ENCODE measurements at regions of chr6 and their contacts with region 1.

Region 1: DNA sequence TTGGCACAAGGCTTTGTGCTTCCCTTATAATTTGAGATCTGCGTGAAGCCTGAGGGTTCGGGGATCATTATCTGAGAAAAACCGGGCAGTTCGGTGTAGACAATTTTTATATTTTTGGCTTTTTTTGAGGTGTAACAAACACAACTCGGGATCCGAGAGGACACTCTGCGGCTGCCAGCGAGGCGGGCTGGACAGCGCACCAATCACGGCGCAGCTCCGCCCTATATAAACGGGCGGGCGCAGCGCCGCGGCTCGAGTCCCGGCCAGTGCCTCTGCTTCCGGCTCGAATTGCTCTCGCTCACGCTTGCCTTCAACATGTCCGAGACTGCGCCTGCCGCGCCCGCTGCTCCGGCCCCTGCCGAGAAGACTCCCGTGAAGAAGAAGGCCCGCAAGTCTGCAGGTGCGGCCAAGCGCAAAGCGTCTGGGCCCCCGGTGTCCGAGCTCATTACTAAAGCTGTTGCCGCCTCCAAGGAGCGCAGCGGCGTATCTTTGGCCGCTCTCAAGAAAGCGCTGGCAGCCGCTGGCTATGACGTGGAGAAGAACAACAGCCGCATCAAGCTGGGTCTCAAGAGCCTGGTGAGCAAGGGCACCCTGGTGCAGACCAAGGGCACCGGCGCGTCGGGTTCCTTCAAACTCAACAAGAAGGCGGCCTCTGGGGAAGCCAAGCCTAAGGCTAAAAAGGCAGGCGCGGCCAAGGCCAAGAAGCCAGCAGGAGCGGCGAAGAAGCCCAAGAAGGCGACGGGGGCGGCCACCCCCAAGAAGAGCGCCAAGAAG is 69.0 kb downstream of the HFE start:
- DNase-seq: peak; percentile 72 to 94 (median 83)
- H3K4me3 ChIP-seq: peak overlapping the region; percentile 84
- H3K4me3 Mint-ChIP-seq: peak overlapping the region; percentile 87 to 98 (median 94)
- H3K27ac ChIP-seq: peak overlapping the region; percentile 97
- H3K27ac Mint-ChIP-seq: peak overlapping the region; percentile 87 to 99 (median 96)
- H3K4me1 ChIP-seq: peaks cover 20% of the 10 kb centered on the region
- H3K4me1 Mint-ChIP-seq: peaks cover 26 to 47% (median 41%) of the 10 kb centered on the region in 3 donors
- H3K27me3 ChIP-seq: no peaks in the 10 kb centered on the region
- H3K27me3 Mint-ChIP-seq: peaks cover 0 to 1% of the 10 kb centered on the region in 2 donors

Region 2: DNA sequence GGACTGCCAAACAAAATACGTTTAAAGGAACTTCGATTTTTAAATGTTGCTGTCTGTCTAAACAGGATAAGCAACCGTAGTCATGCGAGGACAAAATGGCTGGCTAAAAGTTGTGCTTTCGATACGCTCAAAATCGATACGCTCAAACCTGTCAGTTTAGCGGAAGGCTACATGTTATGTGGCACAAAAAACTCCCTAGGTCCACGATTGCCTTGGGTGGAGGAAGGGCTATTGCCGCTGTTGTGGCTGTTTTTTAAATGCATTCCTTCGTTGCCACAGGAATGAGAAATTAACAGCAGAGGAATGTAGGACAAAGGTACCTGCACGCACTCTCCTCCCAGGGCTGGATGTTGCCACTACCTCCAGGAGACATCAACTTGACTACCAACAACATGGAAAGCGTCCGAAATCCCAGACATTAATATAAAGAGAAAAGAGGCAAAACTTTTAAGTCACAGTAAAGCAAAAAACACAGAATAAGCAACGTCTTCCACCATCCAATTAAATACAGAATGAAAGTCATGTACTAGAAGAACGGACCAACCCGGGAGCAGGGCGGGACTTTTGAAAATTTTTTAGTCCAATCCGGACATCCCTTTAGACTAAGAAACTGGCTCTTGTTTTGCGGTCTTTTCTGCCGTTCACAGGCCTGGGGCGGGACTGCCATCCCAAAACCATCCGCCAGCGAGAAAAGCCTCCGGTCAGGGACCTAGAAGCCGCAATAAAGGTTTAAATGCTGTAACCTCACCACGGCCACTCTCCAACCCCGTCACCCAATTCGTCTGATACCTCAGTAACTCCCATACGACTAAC is 101.2 kb before region 1 on chr6:
- CTCF ChIA-PET with region 1: no interaction called
- POLR2A ChIA-PET with region 1: interaction called, 51 read pairs
- DNase-seq: peak; percentile 74 to 89 (median 86)
- H3K4me3 ChIP-seq: peak overlapping the region; percentile 92
- H3K4me3 Mint-ChIP-seq: peak overlapping the region; percentile 90 to 97 (median 94)
- H3K27ac ChIP-seq: peak overlapping the region; percentile 96
- H3K27ac Mint-ChIP-seq: peak overlapping the region; percentile 90 to 99 (median 97)
- H3K4me1 ChIP-seq: peaks cover 9% of the 10 kb centered on the region
- H3K4me1 Mint-ChIP-seq: peaks cover 17 to 30% (median 26%) of the 10 kb centered on the region in 3 donors
- H3K27me3 ChIP-seq: no peaks in the 10 kb centered on the region
- H3K27me3 Mint-ChIP-seq: peaks cover 0 to 4% of the 10 kb centered on the region in 2 donors

Region 3: GRCh38 chr6:26175428-26176181 is 19.3 kb after region 1 on chr6:
- CTCF ChIA-PET with region 1: interaction called, 41 read pairs
- POLR2A ChIA-PET with region 1: interaction called, 317 read pairs
- DNase-seq: peak; percentile 8 to 63 (median 52)
- H3K4me3 ChIP-seq: no peak overlapping the region
- H3K4me3 Mint-ChIP-seq: peak overlapping the region in 2 of 7 donors; percentile 21 to 75
- H3K27ac ChIP-seq: no peak overlapping the region
- H3K27ac Mint-ChIP-seq: peak overlapping the region; percentile 8 to 89 (median 78)
- H3K4me1 ChIP-seq: peaks cover 36% of the 10 kb centered on the region
- H3K4me1 Mint-ChIP-seq: peaks cover 30 to 44% (median 40%) of the 10 kb centered on the region in 3 donors
- H3K27me3 ChIP-seq: no peaks in the 10 kb centered on the region
- H3K27me3 Mint-ChIP-seq: peaks cover 0 to 3% of the 10 kb centered on the region in 2 donors

Region 4: DNA sequence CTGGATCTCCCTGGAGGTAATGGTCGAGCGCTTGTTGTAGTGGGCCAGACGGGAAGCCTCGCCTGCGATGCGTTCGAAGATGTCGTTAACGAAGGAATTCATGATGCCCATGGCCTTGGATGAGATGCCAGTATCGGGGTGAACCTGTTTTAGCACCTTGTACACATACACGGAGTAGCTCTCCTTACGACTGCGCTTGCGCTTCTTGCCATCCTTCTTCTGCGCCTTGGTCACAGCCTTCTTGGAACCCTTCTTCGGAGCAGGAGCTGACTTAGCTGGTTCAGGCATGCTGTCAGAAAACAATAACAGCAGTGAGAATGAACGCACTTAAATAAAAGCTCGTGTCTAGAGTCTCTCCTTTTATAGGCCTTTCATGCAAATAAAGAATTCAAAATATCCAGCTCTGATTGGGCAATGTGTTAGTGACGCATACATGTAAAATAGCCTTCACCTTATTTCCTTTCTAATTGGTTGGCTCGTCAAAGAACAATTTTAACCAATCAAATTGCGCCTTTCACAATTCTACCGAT is 60.2 kb after region 1 on chr6:
- CTCF ChIA-PET with region 1: interaction called, 29 read pairs
- POLR2A ChIA-PET with region 1: interaction called, 160 read pairs
- DNase-seq: peak; percentile 43 to 93 (median 91)
- H3K4me3 ChIP-seq: peak overlapping the region; percentile 91
- H3K4me3 Mint-ChIP-seq: no peak overlapping the region
- H3K27ac ChIP-seq: peak overlapping the region; percentile 94
- H3K27ac Mint-ChIP-seq: no peak overlapping the region
- H3K4me1 ChIP-seq: peaks cover 23% of the 10 kb centered on the region
- H3K4me1 Mint-ChIP-seq: peaks cover 2 to 8% (median 5%) of the 10 kb centered on the region in 3 donors
- H3K27me3 ChIP-seq: no peaks in the 10 kb centered on the region
- H3K27me3 Mint-ChIP-seq: no peaks in the 10 kb centered on the region

Region 5: GRCh38 chr6:26285143-26286134 is 129.2 kb after region 1 on chr6:
- CTCF ChIA-PET with region 1: interaction called, 4 read pairs
- POLR2A ChIA-PET with region 1: interaction called, 52 read pairs
- DNase-seq: peak; percentile 89 to 98 (median 91)
- H3K4me3 ChIP-seq: peak overlapping the region; percentile 75
- H3K4me3 Mint-ChIP-seq: peak overlapping the region; percentile 83 to 97 (median 89)
- H3K27ac ChIP-seq: peak overlapping the region; percentile 97
- H3K27ac Mint-ChIP-seq: peak overlapping the region; percentile 93 to 98 (median 98)
- H3K4me1 ChIP-seq: peaks cover 15% of the 10 kb centered on the region
- H3K4me1 Mint-ChIP-seq: peaks cover 22 to 29% (median 23%) of the 10 kb centered on the region in 3 donors
- H3K27me3 ChIP-seq: no peaks in the 10 kb centered on the region
- H3K27me3 Mint-ChIP-seq: peaks cover 0 to 20% of the 10 kb centered on the region in 2 donors

Region 6: DNA sequence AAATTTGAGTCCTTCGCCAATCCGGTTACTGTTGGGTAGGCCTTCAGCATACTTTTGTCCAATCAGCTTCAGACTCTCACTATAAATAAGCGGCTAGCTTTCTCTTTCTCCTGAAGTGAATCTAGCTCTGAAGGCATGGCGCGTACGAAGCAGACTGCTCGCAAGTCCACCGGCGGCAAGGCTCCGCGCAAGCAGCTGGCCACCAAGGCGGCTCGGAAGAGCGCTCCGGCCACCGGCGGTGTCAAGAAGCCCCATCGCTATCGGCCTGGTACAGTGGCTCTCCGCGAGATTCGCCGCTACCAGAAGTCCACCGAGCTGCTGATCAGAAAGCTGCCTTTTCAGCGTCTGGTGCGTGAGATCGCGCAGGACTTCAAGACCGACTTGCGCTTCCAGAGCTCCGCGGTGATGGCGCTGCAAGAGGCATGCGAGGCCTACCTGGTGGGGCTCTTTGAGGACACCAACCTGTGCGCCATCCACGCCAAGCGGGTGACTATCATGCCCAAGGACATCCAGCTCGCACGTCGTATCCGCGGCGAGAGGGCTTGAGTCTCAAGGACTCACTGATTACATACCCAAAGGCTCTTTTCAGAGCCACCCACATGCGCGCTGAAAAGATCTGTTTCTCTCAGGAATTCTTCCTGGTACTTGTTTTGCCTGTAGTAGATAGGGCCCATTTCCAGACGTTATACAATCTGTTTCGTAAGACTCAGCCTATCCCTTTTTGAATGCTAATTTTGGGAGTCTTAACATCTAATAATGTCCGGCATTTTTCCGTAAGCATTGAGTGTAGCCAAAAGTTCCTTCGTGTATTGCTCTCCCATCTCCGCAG is 1653.9 kb after region 1 on chr6:
- CTCF ChIA-PET with region 1: no interaction called
- POLR2A ChIA-PET with region 1: interaction called, 16 read pairs
- DNase-seq: peak; percentile 64 to 93 (median 88)
- H3K4me3 ChIP-seq: peak overlapping the region; percentile 78
- H3K4me3 Mint-ChIP-seq: peak overlapping the region; percentile 85 to 97 (median 94)
- H3K27ac ChIP-seq: peak overlapping the region; percentile 93
- H3K27ac Mint-ChIP-seq: peak overlapping the region; percentile 94 to 100 (median 97)
- H3K4me1 ChIP-seq: peaks cover 38% of the 10 kb centered on the region
- H3K4me1 Mint-ChIP-seq: peaks cover 54 to 69% (median 65%) of the 10 kb centered on the region in 3 donors
- H3K27me3 ChIP-seq: no peaks in the 10 kb centered on the region
- H3K27me3 Mint-ChIP-seq: peaks cover 0 to 6% of the 10 kb centered on the region in 2 donors

Region 7: DNA sequence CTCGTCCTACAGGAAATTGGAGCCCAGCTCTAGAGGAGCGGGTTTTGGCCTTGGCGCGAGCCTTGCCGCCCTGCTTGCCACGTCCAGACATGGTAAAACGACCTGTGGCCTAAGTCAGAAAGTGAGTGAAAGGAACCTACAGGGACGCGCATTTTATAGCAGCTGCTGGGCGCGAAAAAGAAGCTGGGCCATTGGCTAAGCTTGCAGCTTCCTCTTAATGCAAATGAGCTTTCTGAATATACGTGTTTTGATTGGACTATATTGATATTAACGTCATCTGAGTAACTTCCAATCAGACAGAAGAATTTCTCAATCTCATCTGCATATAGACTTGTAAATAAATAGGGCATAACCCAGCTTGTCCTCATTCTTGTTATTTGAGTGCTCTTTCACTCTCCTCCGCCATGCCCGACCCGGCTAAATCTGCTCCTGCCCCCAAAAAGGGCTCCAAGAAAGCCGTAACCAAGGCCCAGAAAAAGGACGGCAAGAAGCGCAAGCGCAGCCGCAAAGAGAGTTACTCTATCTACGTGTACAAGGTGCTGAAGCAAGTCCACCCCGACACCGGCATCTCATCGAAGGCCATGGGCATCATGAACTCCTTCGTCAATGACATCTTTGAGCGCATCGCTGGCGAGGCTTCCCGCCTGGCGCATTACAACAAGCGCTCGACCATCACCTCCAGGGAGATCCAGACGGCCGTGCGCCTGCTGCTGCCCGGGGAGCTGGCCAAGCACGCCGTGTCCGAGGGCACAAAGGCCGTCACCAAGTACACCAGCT is 1737.0 kb after region 1 on chr6:
- CTCF ChIA-PET with region 1: interaction called, 3 read pairs
- POLR2A ChIA-PET with region 1: interaction called, 17 read pairs
- DNase-seq: peak; percentile 75 to 95 (median 91)
- H3K4me3 ChIP-seq: peak overlapping the region; percentile 82
- H3K4me3 Mint-ChIP-seq: no peak overlapping the region
- H3K27ac ChIP-seq: peak overlapping the region; percentile 79
- H3K27ac Mint-ChIP-seq: peak overlapping the region in 3 of 8 donors; percentile 94 to 97 (median 97)
- H3K4me1 ChIP-seq: peaks cover 19% of the 10 kb centered on the region
- H3K4me1 Mint-ChIP-seq: peaks cover 29 to 44% (median 40%) of the 10 kb centered on the region in 3 donors
- H3K27me3 ChIP-seq: no peaks in the 10 kb centered on the region
- H3K27me3 Mint-ChIP-seq: peaks cover 0 to 2% of the 10 kb centered on the region in 2 donors